Naive thymus-derived CD4-positive, alpha-beta T cell (primary cell): ENCODE measurements at regions of chr1 and their contacts with region 1.

Region 1: GRCh38 chr1:227787513-227788270 is 27.8 kb upstream of the PRSS38 start:
- DNase-seq: peak; percentile 76 to 94 (median 90)
- ATAC-seq: peak; percentile 96
- H3K4me3 ChIP-seq: peak overlapping the region; percentile 79
- H3K4me3 Mint-ChIP-seq: peak overlapping the region; percentile 81 to 89 (median 86)
- H3K27ac ChIP-seq: peak overlapping the region; percentile 23
- H3K27ac Mint-ChIP-seq: peak overlapping the region in 8 of 9 donors; percentile 23 to 84 (median 75)
- H3K4me1 ChIP-seq: peaks cover 5 to 6% of the 10 kb centered on the region in 2 donors
- H3K4me1 Mint-ChIP-seq: peaks cover 7 to 18% (median 11%) of the 10 kb centered on the region in 7 donors
- H3K27me3 ChIP-seq: no peaks in the 10 kb centered on the region
- H3K27me3 Mint-ChIP-seq: peaks cover 0 to 4% (median 0%) of the 10 kb centered on the region in 5 donors

Region 2: DNA sequence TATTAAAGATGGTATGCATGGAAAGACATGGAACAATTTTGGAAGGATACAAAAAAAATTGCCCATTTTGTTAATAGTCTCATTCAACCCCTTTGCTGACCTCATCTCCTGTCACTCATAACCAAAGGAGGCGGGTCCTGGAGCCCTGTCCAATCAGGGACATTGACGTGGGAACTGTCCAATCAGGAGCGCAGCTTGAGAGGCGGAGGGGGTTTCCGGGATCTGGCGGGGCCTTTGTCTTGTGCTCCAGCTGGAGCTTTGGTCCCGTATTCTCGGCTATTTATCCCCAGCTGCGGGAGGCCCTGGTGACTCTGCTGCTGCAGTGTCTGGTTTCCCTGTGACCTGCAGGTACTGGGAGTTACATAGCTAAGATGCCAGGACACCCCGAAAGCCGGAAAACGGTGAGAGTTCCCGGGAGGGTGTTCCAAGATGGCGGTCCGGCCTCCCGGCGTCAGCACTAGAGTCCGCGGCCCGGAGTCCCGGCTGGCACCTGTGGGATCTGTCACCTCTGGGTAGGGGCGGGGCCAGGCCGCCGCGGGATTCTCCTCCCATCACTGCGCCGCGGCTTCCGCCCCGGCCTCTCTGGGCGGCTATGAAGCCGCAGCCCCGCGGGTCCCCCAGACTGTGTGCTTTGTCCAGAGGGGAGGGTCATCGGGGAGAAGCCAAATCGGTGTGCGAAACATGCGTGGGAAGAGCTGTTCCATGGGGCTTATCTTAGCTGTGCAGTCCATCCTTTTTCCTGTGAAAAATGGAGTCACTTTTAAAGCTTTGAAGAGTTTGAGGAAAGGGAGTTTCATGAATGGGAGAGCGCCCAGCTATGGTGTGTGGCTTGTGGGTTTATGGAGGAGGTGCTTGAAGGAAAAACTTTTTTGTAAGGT is 224.1 kb before region 1 on chr1 and contains the start of gene ZNF678:
- CTCF ChIA-PET with region 1: no interaction called
- POLR2A ChIA-PET with region 1: no interaction called
- intact Hi-C with region 1: loop called in 1 of 2 experiments (anchors 1 kb)
- DNase-seq: peak; percentile 58 to 86 (median 84)
- ATAC-seq: peak; percentile 95
- H3K4me3 ChIP-seq: peak within 1 kb of the TSS; percentile 88
- H3K4me3 Mint-ChIP-seq: peak within 1 kb of the TSS; percentile 87 to 97 (median 94)
- H3K27ac ChIP-seq: peak within 1 kb of the TSS; percentile 82
- H3K27ac Mint-ChIP-seq: peak within 1 kb of the TSS; percentile 71 to 95 (median 91)
- H3K4me1 ChIP-seq: peaks cover 4 to 5% of the 10 kb centered on the region in 2 donors
- H3K4me1 Mint-ChIP-seq: peaks cover 17 to 57% (median 40%) of the 10 kb centered on the region in 7 donors
- H3K27me3 ChIP-seq: no peaks in the 10 kb centered on the region
- H3K27me3 Mint-ChIP-seq: peaks cover 22 to 27% (median 27%) of the 10 kb centered on the region in 5 donors
- total RNA-seq, gene ZNF678: 3.2 to 8.3 (median 7.4) TPM

Region 3: GRCh38 chr1:227886993-227887696 is 99.5 kb after region 1 on chr1:
- CTCF ChIA-PET with region 1: no interaction called
- POLR2A ChIA-PET with region 1: interaction called, 4 read pairs
- intact Hi-C with region 1: loop called (anchors 1 to 5 kb)
- DNase-seq: peak in 8 of 9 donors; percentile 20 to 42 (median 35)
- ATAC-seq: peak; percentile 36
- H3K4me3 ChIP-seq: peak overlapping the region; percentile 43
- H3K4me3 Mint-ChIP-seq: peak overlapping the region; percentile 17 to 84 (median 74)
- H3K27ac ChIP-seq: peak overlapping the region; percentile 75
- H3K27ac Mint-ChIP-seq: peak overlapping the region in 8 of 9 donors; percentile 76 to 94 (median 92)
- H3K4me1 ChIP-seq: peaks cover 30 to 47% of the 10 kb centered on the region in 2 donors
- H3K4me1 Mint-ChIP-seq: peaks cover 9 to 60% (median 27%) of the 10 kb centered on the region in 7 donors
- H3K27me3 ChIP-seq: no peaks in the 10 kb centered on the region
- H3K27me3 Mint-ChIP-seq: peaks cover 0 to 4% (median 0%) of the 10 kb centered on the region in 5 donors

Region 4: DNA sequence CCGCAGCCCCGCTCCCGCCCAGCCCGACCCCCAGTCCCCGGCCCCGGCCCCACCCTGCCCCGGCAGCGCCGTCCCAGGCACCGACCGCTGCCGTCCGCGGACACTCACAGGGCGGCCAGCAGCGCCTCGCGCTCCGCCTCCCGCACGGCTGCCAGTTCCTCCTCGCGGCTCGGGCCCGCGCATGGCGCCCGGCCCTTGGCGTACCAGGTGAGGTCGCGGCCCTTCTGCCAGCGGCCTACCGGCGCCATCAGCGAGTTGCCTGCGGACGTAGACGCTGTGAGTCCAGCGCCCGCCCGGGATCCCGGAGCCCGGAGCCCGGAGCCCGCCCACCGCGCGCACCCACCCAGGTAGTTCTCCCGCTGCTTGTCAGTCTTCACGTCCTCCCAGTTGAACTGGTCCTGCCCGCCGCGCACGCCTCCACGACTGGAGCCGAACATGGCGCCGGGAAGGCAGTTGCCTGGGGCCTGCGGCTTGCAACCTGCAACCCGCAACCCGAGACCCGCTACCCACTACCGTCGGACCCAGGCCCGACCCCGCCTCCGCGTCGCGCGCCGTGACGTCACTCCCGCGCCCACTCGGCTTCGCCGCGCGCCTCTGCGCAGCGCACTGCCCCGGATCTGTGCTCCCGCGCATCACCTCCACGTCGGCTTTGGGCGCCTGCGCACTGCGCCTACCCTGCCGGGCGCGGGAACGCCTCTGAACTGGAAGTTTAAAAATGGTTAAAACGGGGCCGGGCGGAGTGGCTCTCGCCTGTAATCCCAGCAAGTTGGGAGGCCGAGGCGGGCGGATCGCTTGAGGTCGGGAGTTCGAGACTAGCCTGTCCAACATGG is 315.3 kb after region 1 on chr1 and contains the start of gene C1orf35:
- CTCF ChIA-PET with region 1: no interaction called
- POLR2A ChIA-PET with region 1: no interaction called
- intact Hi-C with region 1: loop called in 1 of 2 experiments (anchors 1 kb)
- DNase-seq: peak; percentile 90 to 97 (median 93)
- ATAC-seq: peak; percentile 85
- H3K4me3 ChIP-seq: peak within 1 kb of the TSS; percentile 95
- H3K4me3 Mint-ChIP-seq: peak within 1 kb of the TSS; percentile 91 to 97 (median 93)
- H3K27ac ChIP-seq: peak within 1 kb of the TSS; percentile 94
- H3K27ac Mint-ChIP-seq: peak within 1 kb of the TSS; percentile 90 to 95 (median 94)
- H3K4me1 ChIP-seq: peaks cover 17 to 20% of the 10 kb centered on the region in 2 donors
- H3K4me1 Mint-ChIP-seq: peaks cover 6 to 43% (median 23%) of the 10 kb centered on the region in 7 donors
- H3K27me3 ChIP-seq: no peaks in the 10 kb centered on the region
- H3K27me3 Mint-ChIP-seq: no peaks in the 10 kb centered on the region
- total RNA-seq, gene C1orf35: 16.8 to 31.8 (median 27.8) TPM

Region 5: GRCh38 chr1:228275739-228276421 is 488.2 kb after region 1 on chr1:
- CTCF ChIA-PET with region 1: no interaction called
- POLR2A ChIA-PET with region 1: no interaction called
- intact Hi-C with region 1: loop called (anchors 1 kb)
- DNase-seq: peak; percentile 53 to 88 (median 82)
- ATAC-seq: peak; percentile 96
- H3K4me3 ChIP-seq: peak overlapping the region; percentile 77
- H3K4me3 Mint-ChIP-seq: peak overlapping the region; percentile 71 to 88 (median 82)
- H3K27ac ChIP-seq: peak overlapping the region; percentile 77
- H3K27ac Mint-ChIP-seq: peak overlapping the region in 7 of 9 donors; percentile 21 to 73 (median 60)
- H3K4me1 ChIP-seq: no peaks in the 10 kb centered on the region
- H3K4me1 Mint-ChIP-seq: peaks cover 8 to 20% (median 19%) of the 10 kb centered on the region in 7 donors
- H3K27me3 ChIP-seq: no peaks in the 10 kb centered on the region
- H3K27me3 Mint-ChIP-seq: no peaks in the 10 kb centered on the region

Region 6: DNA sequence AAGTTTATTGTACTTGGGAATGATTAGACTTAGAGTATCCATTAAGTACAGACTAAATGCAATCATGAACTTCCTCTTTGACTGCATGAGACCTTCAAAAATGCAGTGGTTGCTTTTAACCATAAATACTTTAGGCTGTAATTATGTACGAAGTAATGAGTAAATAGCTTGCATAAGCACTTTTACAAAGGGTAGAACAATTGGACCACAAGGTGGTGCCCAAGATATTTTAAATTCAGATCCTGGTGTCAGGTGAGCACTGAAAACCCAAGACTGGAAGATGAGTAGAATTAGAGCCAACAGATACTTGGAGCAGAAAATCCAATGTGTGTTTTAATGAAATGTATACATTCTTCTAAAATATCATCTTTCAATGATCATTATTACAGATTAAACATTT is 904.2 kb after region 1 on chr1:
- CTCF ChIA-PET with region 1: no interaction called
- POLR2A ChIA-PET with region 1: no interaction called
- intact Hi-C with region 1: no loop called
- DNase-seq: peak in 7 of 9 donors; percentile 20 to 57 (median 42)
- ATAC-seq: peak; percentile 45
- H3K4me3 ChIP-seq: no peak overlapping the region
- H3K4me3 Mint-ChIP-seq: no peak overlapping the region
- H3K27ac ChIP-seq: no peak overlapping the region
- H3K27ac Mint-ChIP-seq: no peak overlapping the region
- H3K4me1 ChIP-seq: peaks cover 0 to 7% of the 10 kb centered on the region in 2 donors
- H3K4me1 Mint-ChIP-seq: peaks cover 5 to 14% (median 8%) of the 10 kb centered on the region in 7 donors
- H3K27me3 ChIP-seq: no peaks in the 10 kb centered on the region
- H3K27me3 Mint-ChIP-seq: peaks cover 6 to 38% (median 13%) of the 10 kb centered on the region in 5 donors